Psoas muscle (tissue), 8 donors: ENCODE measurements at regions of chr1 and their contacts with region 1.

Region 1: DNA sequence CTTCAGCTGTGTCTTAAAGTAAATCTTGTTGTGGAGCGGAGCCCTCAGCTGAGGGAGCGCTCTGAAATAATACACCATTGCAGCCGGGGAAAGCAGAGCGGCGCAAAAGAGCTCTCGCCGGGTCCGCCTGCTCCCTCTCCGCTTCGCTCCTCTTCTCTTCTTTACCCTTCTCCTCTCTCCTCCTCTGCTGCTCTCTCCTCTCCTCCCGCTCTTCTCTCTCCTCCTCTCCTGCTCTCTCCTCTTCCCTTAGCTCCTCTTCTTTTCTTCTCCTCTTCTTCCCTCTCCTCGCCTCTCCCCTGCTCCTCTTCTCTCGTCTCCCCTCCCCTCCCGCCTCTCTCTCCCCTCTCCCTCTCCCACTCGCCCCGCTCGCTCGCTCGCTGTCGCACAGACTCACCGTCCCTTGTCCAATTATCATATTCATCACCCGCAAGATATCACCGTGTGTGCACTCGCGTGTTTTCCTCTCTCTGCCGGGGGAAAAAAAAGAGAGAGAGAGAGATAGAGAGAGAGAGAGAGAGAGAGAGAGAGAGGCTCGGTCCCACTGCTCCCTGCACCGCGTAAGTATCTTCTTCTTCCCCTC is at the start of gene PROX1:
- DNase-seq: peak in 1 of 2 donors; percentile 57
- ATAC-seq: peak; percentile 48 to 90 (median 90)
- H3K4me3 ChIP-seq: peak within 1 kb of the TSS; percentile 72
- H3K27ac ChIP-seq: peak within 1 kb of the TSS; percentile 85
- H3K4me1 ChIP-seq: peaks cover 13% of the 10 kb centered on the region
- H3K27me3 ChIP-seq: peaks cover 0 to 44% (median 4%) of the 10 kb centered on the region in 3 donors
- CTCF ChIP-seq: no peak
- total RNA-seq, gene PROX1: 8.3 to 20.6 (median 18.3) TPM

Region 2: DNA sequence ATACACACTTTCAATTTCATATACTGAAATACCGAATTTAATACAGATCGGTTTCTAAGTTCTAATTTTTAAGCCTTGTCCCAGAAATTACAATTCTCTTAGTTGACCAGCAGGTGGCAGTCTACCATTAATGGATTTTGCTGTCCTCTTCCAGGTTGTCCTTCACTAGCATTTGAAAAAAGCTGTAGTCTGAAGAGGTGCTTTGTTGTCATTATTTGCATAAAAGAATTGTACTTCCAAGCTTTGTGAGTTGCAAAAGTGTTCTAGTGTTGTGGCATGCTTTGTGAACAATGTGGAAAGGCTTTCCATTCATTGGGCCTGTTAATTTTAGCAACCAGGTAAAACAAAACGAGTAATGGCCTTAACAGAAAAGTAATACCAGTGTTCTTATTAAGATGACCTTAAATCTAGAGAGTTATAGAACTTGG is 743.3 kb before region 1 on chr1:
- intact Hi-C with region 1: loop called in 1 of 2 experiments (anchors 10 kb)
- DNase-seq: no peak
- ATAC-seq: no peak
- H3K4me3 ChIP-seq: no peak overlapping the region
- H3K27ac ChIP-seq: no peak overlapping the region
- H3K4me1 ChIP-seq: no peaks in the 10 kb centered on the region
- H3K27me3 ChIP-seq: no peaks in the 10 kb centered on the region
- CTCF ChIP-seq: peak; percentile 80

Region 3: GRCh38 chr1:213374369-213374768 is 613.6 kb before region 1 on chr1:
- intact Hi-C with region 1: loop called in 1 of 2 experiments (anchors 10 kb)
- DNase-seq: peak; percentile 41 to 68
- ATAC-seq: peak; percentile 63 to 85 (median 71)
- H3K4me3 ChIP-seq: no peak overlapping the region
- H3K27ac ChIP-seq: no peak overlapping the region
- H3K4me1 ChIP-seq: no peaks in the 10 kb centered on the region
- H3K27me3 ChIP-seq: no peaks in the 10 kb centered on the region
- CTCF ChIP-seq: peak; percentile 85

Region 4: DNA sequence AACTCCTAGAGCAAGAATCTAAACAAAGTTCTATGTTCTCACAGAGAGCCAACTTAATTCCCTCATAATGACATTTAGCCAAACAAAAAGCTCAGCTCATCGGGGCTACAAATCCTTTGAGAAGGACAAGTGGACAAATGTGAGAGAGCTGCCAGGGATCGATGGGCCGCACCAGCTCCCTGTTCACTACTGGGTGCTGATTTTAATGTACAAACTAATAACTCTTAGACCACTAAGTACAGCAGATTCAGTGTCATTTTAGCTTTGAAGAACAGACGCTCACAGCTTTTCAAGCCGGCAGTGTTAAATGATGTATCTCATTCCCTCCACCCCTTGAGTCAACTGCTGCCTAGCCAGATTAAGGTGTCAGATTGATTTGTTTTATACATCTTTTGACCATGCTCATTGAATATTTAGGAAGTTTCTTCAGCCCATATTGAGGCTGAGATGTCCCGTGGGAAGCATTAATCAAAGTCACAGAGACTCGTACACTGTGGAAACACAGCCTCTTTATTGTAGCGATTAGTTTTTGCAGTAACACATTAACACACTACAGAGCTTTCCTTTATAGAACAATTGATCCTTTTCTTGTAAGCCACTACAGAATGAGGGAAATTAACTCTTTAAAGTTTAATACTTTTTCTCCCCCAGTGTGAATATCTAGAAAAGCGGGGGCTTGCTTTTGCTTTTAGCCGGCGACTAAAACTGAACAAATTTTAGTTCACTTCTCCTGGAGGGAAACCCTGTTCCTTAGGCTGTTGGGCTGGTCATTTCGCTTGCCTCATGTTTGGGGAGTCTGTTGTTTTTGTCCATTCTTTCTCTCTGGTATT is 21.0 kb after region 1 on chr1:
- intact Hi-C with region 1: no loop called
- DNase-seq: no peak
- ATAC-seq: no peak
- H3K4me3 ChIP-seq: no peak overlapping the region
- H3K27ac ChIP-seq: no peak overlapping the region
- H3K4me1 ChIP-seq: no peaks in the 10 kb centered on the region
- H3K27me3 ChIP-seq: no peaks in the 10 kb centered on the region
- CTCF ChIP-seq: no peak

Region 5: GRCh38 chr1:214029796-214030195 is 41.8 kb after region 1 on chr1:
- intact Hi-C with region 1: loop called in 1 of 2 experiments (anchors 5 kb)
- DNase-seq: no peak
- ATAC-seq: peak; percentile 83 to 92 (median 88)
- H3K4me3 ChIP-seq: peak overlapping the region; percentile 33
- H3K27ac ChIP-seq: peak overlapping the region; percentile 79
- H3K4me1 ChIP-seq: peaks cover 7% of the 10 kb centered on the region
- H3K27me3 ChIP-seq: peaks cover 0 to 5% (median 0%) of the 10 kb centered on the region in 3 donors
- CTCF ChIP-seq: no peak

Region 6: GRCh38 chr1:214123061-214123784 is 135.2 kb after region 1 on chr1:
- intact Hi-C with region 1: loop called in 1 of 2 experiments (anchors 10 kb)
- DNase-seq: no peak
- ATAC-seq: peak; percentile 70 to 92 (median 82)
- H3K4me3 ChIP-seq: no peak overlapping the region
- H3K27ac ChIP-seq: no peak overlapping the region
- H3K4me1 ChIP-seq: no peaks in the 10 kb centered on the region
- H3K27me3 ChIP-seq: no peaks in the 10 kb centered on the region
- CTCF ChIP-seq: peak; percentile 60